PC-9 (cell line): ENCODE measurements at regions of chr5 and their contacts with region 1.

Region 1: DNA sequence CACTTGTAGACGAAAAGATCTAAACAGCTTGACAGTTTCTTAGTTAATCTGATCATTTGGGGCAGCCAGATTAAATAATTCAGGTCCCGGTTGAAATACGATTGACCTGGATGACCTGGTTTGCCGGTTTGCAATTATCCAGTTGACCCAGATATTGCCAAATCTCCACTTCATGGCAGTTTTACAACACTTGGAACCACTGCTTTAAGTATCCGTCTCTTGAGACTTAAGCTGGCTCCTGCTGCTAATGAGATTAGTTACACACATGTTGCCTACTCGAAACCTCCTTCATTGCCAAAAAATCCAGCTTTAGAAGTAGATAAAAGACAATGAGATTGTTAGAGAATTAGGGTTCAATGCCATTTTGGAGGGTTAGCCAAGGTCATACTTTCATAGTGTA is 136.2 kb upstream of the HAPLN1 start:
- DNase-seq: no peak
- H3K4me3 ChIP-seq: no peak overlapping the region
- H3K27ac ChIP-seq: no peak overlapping the region
- H3K4me1 ChIP-seq: no peaks in the 10 kb centered on the region
- H3K27me3 ChIP-seq: no peaks in the 10 kb centered on the region
- CTCF ChIP-seq: no peak

Region 2: DNA sequence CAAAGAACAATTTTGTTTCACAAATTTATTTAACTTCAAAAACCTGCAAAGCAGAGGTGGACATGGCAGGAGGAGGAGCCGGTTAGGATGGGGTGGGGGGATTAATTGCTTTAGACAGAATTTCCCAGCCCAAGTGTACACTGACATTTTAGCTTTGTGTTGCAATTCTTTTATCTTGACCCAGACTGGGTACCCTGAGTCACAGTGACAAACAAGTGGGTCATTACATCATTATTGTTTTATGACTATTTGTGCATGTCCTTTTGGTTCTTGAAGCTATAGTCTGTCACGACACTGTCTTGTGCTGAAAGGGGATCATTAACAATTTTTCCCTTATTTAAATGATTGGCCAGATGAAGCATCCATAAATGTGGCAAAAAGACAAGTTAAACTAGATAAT is 469.8 kb before region 1 on chr5:
- CTCF ChIA-PET with region 1: no interaction called
- POLR2A ChIA-PET with region 1: interaction called, 12 read pairs
- intact Hi-C with region 1: no loop called
- DNase-seq: no peak
- H3K4me3 ChIP-seq: no peak overlapping the region
- H3K27ac ChIP-seq: no peak overlapping the region
- H3K4me1 ChIP-seq: no peaks in the 10 kb centered on the region
- H3K27me3 ChIP-seq: no peaks in the 10 kb centered on the region
- CTCF ChIP-seq: no peak

Region 3: DNA sequence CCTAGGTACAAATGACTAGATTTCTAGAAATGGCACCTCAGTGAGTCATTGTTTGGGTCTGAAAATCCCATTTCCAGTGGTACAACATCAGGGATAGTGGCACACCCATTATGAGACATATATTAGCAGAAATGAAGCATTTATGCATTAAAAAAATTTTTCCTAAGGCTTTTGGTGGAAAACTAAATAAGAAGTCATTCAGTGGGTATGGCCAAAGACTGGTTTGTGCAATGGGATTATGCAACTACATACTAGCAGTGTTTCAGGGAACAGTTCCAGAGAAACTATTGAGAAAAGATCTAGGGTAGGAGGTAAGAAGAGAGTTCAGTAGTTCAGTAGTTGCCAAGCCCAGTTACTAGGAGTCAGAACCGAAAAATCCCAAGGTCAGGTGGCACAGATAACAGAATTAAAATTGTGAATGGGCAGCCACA is 29.8 kb before region 1 on chr5:
- CTCF ChIA-PET with region 1: no interaction called
- POLR2A ChIA-PET with region 1: no interaction called
- intact Hi-C with region 1: no loop called
- DNase-seq: no peak
- H3K4me3 ChIP-seq: no peak overlapping the region
- H3K27ac ChIP-seq: no peak overlapping the region
- H3K4me1 ChIP-seq: no peaks in the 10 kb centered on the region
- H3K27me3 ChIP-seq: no peaks in the 10 kb centered on the region
- CTCF ChIP-seq: no peak